GM10248 (cell line): ENCODE measurements at regions of chr2 and their contacts with region 1.

Region 1: DNA sequence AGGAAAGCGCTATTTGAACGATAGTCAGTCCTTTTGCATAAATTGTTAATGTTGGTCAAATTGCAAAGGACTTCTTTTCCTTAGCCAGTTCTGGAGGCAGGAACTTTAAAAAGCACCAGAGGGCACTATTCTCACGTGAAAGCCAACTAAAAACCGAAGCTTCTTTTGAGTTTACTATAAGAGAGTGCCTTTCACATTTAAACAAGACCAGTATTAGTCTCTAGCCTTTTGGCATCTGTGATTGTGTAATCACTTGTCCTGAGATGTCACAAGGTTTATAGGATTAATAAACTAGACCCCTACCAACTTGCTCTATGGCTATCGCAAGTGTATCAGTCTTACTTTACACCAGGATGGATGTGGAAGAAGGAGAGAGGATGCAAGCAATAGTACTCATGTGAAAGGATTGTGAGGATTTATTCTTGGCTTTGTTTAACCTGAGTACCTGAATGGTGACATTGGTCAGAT is 14.4 kb upstream of the STAT4 start:
- DNase-seq: peak; percentile 31
- CTCF ChIP-seq: peak; percentile 45

Region 2: GRCh38 chr2:190827720-190828119 is 337.5 kb before region 1 on chr2:
- CTCF ChIA-PET with region 1: no interaction called
- POLR2A ChIA-PET with region 1: no interaction called
- DNase-seq: no peak
- CTCF ChIP-seq: no peak

Region 3: DNA sequence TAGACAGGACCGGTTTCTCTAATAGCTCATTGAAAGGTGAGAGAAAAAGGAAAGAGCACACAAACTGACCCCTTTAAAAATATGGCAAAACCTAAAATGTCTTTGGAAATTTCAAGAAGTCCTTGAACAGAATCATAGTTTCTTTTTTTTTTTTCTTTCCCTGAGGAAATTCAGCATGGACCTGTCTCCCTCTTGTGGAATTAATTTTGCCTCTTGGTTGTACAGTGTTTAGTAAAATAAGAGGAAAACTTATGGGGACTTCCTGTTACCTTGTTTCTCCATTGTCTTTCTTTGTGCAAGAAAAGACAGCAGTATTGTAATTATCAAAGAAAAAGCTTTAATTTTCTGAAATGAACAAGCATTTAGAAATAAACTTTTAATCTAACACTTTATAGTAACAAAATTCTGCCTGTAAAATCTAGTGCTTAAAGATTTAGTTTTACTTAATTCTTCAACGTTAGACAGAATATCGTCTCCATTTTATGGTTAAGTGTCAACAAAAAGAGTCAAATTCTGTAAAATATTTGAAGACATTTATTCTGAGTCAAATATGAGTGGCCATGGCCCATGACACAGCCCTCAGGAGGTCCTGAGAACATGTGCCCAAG is 336.5 kb after region 1 on chr2:
- CTCF ChIA-PET with region 1: interaction called, 10 read pairs
- POLR2A ChIA-PET with region 1: no interaction called
- DNase-seq: no peak
- CTCF ChIP-seq: no peak

Region 4: GRCh38 chr2:191526091-191526490 is 360.9 kb after region 1 on chr2:
- CTCF ChIA-PET with region 1: interaction called, 10 read pairs
- POLR2A ChIA-PET with region 1: no interaction called
- DNase-seq: no peak
- CTCF ChIP-seq: no peak